IMR-90 (cell line): ENCODE measurements at regions of chr11 and their contacts with region 1.

Region 1: GRCh38 chr11:46489661-46490560 is 98.3 kb upstream of the CHRM4 start:
- DNase-seq: peak; percentile 69
- ATAC-seq: peak; percentile 73
- H3K4me3 ChIP-seq: no peak overlapping the region
- H3K27ac ChIP-seq: no peak overlapping the region
- H3K4me1 ChIP-seq: peaks cover 5% of the 10 kb centered on the region
- H3K27me3 ChIP-seq: no peaks in the 10 kb centered on the region
- CTCF ChIP-seq: peak; percentile 61
- POLR2A ChIP-seq: no peak
- RAD21 ChIP-seq: peak; percentile 56

Region 2: DNA sequence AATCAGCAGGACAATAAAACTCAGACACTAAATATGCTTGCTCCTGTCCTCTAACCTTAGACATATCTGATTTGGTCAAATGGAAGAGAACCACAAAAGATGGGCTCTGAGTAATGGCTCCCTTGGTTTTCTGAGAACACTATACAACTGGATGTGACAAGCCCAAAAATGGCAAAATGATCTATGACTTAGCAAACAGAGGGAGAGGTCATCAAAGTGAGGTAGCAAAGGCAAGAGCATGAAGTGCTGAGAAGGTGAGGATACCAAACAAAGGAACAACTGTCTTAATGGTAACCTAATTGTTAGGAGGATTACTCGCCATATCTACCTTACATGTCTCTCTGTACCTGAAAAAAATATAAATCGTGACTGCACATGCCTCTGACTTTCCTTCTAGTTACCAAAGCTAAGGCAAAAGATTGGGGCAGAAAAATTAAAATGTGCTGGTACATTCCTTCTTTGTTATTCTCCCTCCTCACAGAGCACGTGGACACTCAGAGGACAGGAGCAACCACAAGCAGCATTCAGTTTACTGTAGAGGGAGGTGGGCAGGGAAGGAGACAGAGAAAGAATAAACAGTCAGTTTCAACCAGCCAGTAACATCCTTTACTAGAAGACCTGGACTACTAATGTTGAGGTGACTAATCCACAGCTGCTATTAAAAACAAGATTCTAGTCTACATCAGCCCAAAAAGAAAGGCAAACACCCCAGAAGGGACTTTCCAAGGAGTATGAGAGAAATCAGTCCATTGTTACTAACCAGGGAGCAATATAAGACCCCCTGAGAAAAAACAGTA is 15.1 kb after region 1 on chr11:
- CTCF ChIA-PET with region 1: interaction called, 6 read pairs
- POLR2A ChIA-PET with region 1: no interaction called
- dilution Hi-C with region 1: no loop called
- in situ Hi-C with region 1: no loop called
- intact Hi-C with region 1: loop called (anchors 2 kb)
- DNase-seq: peak; percentile 97
- ATAC-seq: peak; percentile 98
- H3K4me3 ChIP-seq: no peak overlapping the region
- H3K27ac ChIP-seq: no peak overlapping the region
- H3K4me1 ChIP-seq: peaks cover 13% of the 10 kb centered on the region
- H3K27me3 ChIP-seq: no peaks in the 10 kb centered on the region
- CTCF ChIP-seq: no peak
- POLR2A ChIP-seq: no peak
- RAD21 ChIP-seq: no peak

Region 3: DNA sequence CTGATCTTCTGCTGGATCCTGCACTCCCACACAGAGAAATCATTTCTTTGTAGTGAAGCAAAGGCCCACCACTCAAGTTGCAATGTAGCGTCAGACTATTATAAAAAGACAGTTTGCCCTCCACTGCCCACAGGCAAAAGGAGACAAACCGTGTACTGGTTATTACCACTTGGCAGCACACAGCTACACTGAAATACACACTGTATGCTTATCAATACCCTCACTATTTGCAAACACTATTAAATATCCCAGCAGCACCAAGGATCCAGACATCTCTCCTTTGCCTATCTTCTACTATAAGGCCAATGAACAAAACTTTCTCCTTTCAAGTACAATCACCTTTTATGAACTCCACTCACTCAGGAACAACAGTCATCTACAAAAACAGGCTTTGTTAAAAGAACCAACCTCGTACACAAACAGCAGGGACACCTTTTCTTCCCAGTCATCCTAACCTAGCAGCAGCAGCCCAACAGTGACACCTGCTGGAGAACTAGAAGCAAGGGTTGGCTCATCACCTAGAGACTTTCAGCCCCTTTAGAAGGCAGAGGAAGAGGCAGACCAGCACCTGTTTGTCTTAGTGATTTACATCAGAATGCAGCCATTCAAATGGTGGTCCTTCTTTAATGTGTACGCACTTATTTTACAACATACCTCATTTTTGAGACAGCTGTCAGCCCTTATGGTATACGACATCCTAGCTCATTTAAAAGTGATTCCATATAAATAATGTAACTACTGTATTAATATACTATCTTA is 47.8 kb after region 1 on chr11:
- CTCF ChIA-PET with region 1: interaction called, 5 read pairs
- POLR2A ChIA-PET with region 1: no interaction called
- dilution Hi-C with region 1: no loop called
- in situ Hi-C with region 1: no loop called
- intact Hi-C with region 1: loop called (anchors 2 kb)
- DNase-seq: peak; percentile 78
- ATAC-seq: peak; percentile 88
- H3K4me3 ChIP-seq: no peak overlapping the region
- H3K27ac ChIP-seq: no peak overlapping the region
- H3K4me1 ChIP-seq: no peaks in the 10 kb centered on the region
- H3K27me3 ChIP-seq: no peaks in the 10 kb centered on the region
- CTCF ChIP-seq: peak; percentile 92
- POLR2A ChIP-seq: no peak
- RAD21 ChIP-seq: peak; percentile 94